Activated naive CD4-positive, alpha-beta T cell treated with anti-CD3 and anti-CD28 coated beads for 36 hours (primary cell): ENCODE measurements at regions of chr5 and their contacts with region 1.

Region 1: GRCh38 chr5:32613050-32613672 is 27.8 kb downstream of the SUB1 start:
- DNase-seq: peak; percentile 94
- H3K4me3 Mint-ChIP-seq: no peak overlapping the region
- H3K27ac Mint-ChIP-seq: no peak overlapping the region
- H3K4me1 Mint-ChIP-seq: peaks cover 3% of the 10 kb centered on the region
- H3K27me3 Mint-ChIP-seq: no peaks in the 10 kb centered on the region

Region 2: GRCh38 chr5:31581498-31582099 is 1031.6 kb before region 1 on chr5:
- CTCF ChIA-PET with region 1: no interaction called
- intact Hi-C with region 1: loop called (anchors 5 kb)
- DNase-seq: peak; percentile 8
- H3K4me3 Mint-ChIP-seq: no peak overlapping the region
- H3K27ac Mint-ChIP-seq: no peak overlapping the region
- H3K4me1 Mint-ChIP-seq: no peaks in the 10 kb centered on the region
- H3K27me3 Mint-ChIP-seq: peaks cover 9% of the 10 kb centered on the region

Region 3: DNA sequence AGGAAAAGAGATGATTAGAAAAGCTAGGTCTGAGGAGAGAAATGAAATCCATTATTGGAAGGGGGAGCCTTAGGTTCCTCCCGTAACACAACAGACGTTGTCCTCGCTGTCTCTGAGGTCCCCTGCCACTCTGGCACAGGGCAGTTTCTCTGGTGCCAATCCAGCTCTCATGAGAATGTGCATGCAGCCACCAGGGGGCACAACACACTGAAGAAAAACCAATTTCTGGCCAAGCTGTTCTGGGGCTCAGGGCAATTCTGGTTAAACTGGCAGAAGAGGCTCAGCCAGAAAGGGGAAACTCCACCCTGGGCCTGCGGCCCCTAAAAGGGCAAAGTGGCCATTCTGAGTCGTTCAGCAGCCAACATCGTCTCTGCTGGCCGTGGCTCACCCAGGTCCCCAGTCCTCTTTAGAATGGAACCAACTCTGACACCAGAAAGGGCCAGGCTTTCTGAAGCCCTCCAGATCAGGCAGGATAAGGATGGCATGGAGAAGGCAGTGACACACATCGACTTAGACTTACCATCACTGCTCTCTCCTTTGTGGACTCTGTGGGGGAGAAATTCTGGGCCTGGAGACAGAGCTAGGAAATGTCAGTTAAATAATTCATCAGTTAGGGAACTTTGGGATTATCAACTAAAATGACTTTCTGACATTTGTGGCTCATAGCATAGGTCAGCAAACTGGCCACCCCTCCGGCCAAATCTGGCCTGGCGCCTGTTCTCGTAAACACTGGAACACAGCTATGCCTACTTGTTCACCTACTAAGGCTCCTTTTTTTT is 380.5 kb before region 1 on chr5:
- CTCF ChIA-PET with region 1: interaction called, 15 read pairs
- intact Hi-C with region 1: loop called (anchors 1 kb)
- DNase-seq: peak; percentile 88
- H3K4me3 Mint-ChIP-seq: no peak overlapping the region
- H3K27ac Mint-ChIP-seq: no peak overlapping the region
- H3K4me1 Mint-ChIP-seq: peaks cover 7% of the 10 kb centered on the region
- H3K27me3 Mint-ChIP-seq: no peaks in the 10 kb centered on the region

Region 4: DNA sequence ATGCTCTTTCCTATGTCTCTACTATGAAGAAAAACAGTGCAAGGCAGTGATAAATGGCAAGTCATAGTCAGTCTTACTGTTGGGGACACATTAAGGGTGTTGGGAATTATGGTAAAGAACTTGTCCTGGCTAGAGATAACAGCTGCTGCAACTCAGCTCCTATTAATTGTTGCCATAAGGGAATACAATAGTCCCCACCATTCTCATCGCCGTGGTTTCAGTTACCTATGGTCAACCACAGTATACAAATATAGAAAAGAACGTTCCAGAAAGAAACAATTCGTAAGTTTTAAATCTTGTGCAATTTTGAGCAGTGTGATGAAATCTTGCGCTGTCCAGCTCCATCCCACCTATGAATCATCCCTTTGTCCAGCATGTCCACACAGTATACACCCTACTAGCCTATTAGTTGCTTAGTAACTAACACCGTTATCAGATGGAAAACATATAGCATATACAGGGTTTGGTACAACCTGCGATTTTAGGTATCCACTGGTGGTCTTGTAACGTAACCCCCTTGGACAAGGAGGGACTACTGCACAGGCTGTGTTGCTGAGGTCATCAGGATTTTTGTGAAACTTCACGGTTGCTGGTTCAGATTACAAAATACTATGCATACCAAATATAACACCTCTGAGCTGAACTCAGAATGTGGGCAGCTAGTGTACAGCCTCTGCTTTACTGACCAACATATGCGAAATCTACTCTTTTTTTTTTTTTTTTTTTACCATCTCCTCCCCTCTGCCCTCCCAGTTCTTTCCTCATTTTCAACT is 222.2 kb before region 1 on chr5:
- CTCF ChIA-PET with region 1: interaction called, 3 read pairs
- intact Hi-C with region 1: loop called (anchors 2 kb)
- DNase-seq: no peak
- H3K4me3 Mint-ChIP-seq: no peak overlapping the region
- H3K27ac Mint-ChIP-seq: no peak overlapping the region
- H3K4me1 Mint-ChIP-seq: peaks cover 8% of the 10 kb centered on the region
- H3K27me3 Mint-ChIP-seq: no peaks in the 10 kb centered on the region

Region 5: DNA sequence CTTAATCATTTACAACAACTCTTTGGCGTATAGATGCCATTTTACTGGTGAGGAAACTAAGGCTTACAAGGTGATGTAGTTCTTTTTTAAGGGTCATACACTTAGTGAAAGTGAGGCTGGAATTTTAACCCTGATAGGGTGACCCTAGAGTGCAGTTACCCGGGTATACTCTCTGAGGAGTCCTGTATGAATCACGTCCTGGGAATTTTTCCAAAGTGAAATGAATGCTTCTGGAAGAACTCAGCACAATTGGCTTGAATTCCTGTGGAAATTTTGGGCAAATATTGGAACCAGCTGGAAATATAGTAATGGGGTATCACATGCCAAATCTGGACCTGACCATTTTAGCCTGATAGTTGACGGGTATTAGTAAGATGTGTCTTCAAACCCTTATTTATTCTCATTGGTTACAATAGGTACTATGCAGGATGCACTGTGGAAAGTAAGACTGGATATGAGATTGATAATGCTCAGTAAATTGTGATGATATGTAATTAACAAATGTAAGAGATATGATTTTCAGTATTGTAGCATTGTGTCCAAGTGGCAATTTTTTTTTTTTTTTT is 13.0 kb before region 1 on chr5:
- CTCF ChIA-PET with region 1: interaction called, 11 read pairs
- intact Hi-C with region 1: no loop called
- DNase-seq: no peak
- H3K4me3 Mint-ChIP-seq: no peak overlapping the region
- H3K27ac Mint-ChIP-seq: no peak overlapping the region
- H3K4me1 Mint-ChIP-seq: peaks cover 47% of the 10 kb centered on the region
- H3K27me3 Mint-ChIP-seq: no peaks in the 10 kb centered on the region